ENCODE measurements at regions of chr2 and their contacts with region 1.

Region 1: DNA sequence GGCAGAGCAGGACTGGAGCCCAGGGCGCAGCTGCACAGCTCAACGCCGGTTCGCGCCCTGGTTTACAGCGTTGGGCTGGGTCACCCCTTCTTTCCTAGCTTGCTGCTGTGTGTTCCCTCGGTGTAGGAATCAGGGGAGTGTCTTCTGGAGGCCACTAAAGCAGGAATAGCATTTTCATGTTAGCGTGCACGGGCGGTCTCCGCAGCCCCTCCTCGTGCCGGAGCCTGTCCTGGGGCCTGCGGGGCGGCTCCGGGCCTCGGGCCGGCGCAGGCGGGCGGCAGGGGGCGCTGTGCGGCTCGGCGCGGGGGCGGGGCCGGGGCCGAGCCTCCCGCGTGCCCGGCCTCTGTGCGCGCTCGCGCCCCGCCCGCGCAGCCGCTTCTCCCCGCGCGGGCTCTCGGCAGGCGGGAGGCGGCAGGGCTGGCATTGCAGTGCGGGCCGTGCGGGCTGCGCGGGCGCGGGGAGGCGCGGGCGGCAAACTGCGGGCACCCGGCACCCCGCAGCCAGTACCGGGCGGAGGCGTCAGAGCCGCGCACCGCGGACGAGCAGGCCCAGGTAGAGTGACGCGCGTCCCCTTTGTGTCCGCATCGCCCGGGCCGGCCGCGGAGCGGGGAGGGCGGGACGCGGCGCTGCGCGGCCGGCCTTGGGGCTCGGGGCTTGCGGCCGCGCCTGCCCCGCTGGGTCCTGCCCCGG is at the start of gene RNF144A:
- DNase-seq: peak; percentile 72
- H3K4me3 ChIP-seq: peak within 1 kb of the TSS; percentile 49 to 93 (median 86)
- H3K27ac ChIP-seq: peak within 1 kb of the TSS; percentile 4 to 78 (median 70)
- H3K4me1 ChIP-seq: peaks cover 0 to 37% (median 7%) of the 10 kb centered on the region in 4 donors
- H3K27me3 ChIP-seq: no peaks in the 10 kb centered on the region
- CTCF ChIP-seq: peak in 3 of 4 experiments; percentile 3 to 51 (median 29)
- EP300 ChIP-seq: no peak
- POLR2A ChIP-seq: no peak
- total RNA-seq, gene RNF144A: 5.7 to 14.2 (median 12.3) TPM

Region 2: DNA sequence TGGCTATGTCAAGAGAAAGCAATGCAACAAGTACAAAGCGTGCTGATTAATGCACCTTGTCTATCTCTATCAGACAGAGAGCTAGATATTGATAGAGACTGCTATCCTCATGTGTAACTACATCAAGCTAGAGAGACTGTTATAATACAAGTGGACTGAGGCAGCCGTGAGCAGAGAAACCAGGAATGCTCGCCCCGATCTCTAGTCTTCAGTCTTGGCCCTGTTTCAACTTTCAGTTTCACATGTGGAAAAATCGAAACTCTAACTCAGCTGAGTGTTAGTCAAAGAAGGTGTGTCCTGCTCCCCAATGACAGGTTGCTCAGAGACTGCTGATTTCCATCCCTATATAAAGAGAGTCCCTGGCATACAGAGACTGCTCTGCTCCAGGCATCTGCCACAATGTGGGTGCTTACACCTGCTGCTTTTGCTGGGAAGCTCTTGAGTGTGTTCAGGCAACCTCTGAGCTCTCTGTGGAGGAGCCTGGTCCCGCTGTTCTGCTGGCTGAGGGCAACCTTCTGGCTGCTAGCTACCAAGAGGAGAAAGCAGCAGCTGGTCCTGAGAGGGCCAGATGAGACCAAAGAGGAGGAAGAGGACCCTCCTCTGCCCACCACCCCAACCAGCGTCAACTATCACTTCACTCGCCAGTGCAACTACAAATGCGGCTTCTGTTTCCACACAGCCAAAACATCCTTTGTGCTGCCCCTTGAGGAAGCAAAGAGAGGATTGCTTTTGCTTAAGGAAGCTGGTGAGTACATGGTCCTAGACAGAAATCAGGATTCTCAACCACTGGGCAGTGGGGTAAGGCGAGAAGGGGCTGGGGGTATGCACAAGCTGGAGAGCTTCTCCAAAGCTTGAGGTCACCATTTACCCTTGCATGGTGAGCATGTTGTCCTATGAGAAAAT is 39.6 kb before region 1 on chr2 and contains the start of gene RSAD2:
- intact Hi-C with region 1: loop called (anchors 5 kb)
- DNase-seq: no peak
- H3K4me3 ChIP-seq: peak within 1 kb of the TSS; percentile 28 to 53 (median 50)
- H3K27ac ChIP-seq: peak within 1 kb of the TSS; percentile 51 to 68 (median 64)
- H3K4me1 ChIP-seq: peaks cover 0 to 12% (median 8%) of the 10 kb centered on the region in 4 donors
- H3K27me3 ChIP-seq: no peaks in the 10 kb centered on the region
- CTCF ChIP-seq: no peak
- EP300 ChIP-seq: no peak
- POLR2A ChIP-seq: no peak
- total RNA-seq, gene RSAD2: 7.2 to 13.2 (median 11.3) TPM

Region 3: DNA sequence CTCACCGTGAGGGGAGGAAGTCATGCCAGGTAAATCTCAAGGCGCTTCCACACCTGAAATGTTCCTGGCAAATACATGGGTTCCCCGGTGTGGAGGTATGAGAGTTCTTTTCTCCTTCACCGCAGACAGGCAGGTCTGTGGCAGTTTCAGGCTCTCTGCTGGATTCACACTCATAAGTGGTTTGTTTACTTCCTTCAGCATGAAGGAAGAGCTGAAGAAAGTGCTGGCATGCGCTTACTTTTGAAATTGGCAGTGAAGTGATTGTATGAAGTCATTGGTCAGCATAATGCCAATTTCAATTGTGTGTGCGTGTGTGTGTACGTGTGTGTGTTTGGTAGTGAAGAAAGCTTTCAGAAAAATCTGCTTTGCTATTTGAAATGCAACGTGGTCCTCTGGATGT is 43.4 kb after region 1 on chr2:
- intact Hi-C with region 1: loop called (anchors 5 kb)
- DNase-seq: no peak
- H3K4me3 ChIP-seq: peak overlapping the region in 1 of 4 donors; percentile 1
- H3K27ac ChIP-seq: peak overlapping the region in 3 of 4 donors; percentile 4 to 54 (median 25)
- H3K4me1 ChIP-seq: peaks cover 0 to 18% (median 15%) of the 10 kb centered on the region in 4 donors
- H3K27me3 ChIP-seq: no peaks in the 10 kb centered on the region
- CTCF ChIP-seq: no peak
- EP300 ChIP-seq: no peak
- POLR2A ChIP-seq: no peak

Region 4: GRCh38 chr2:6977113-6977741 is 60.0 kb after region 1 on chr2:
- intact Hi-C with region 1: loop called (anchors 5 kb)
- DNase-seq: peak; percentile 91
- H3K4me3 ChIP-seq: peak overlapping the region in 2 of 4 donors; percentile 11 to 23
- H3K27ac ChIP-seq: peak overlapping the region in 3 of 4 donors; percentile 66 to 81 (median 73)
- H3K4me1 ChIP-seq: peaks cover 0 to 22% (median 13%) of the 10 kb centered on the region in 4 donors
- H3K27me3 ChIP-seq: no peaks in the 10 kb centered on the region
- CTCF ChIP-seq: no peak
- EP300 ChIP-seq: peak in 1 of 4 donors; percentile 10
- POLR2A ChIP-seq: no peak

Region 5: DNA sequence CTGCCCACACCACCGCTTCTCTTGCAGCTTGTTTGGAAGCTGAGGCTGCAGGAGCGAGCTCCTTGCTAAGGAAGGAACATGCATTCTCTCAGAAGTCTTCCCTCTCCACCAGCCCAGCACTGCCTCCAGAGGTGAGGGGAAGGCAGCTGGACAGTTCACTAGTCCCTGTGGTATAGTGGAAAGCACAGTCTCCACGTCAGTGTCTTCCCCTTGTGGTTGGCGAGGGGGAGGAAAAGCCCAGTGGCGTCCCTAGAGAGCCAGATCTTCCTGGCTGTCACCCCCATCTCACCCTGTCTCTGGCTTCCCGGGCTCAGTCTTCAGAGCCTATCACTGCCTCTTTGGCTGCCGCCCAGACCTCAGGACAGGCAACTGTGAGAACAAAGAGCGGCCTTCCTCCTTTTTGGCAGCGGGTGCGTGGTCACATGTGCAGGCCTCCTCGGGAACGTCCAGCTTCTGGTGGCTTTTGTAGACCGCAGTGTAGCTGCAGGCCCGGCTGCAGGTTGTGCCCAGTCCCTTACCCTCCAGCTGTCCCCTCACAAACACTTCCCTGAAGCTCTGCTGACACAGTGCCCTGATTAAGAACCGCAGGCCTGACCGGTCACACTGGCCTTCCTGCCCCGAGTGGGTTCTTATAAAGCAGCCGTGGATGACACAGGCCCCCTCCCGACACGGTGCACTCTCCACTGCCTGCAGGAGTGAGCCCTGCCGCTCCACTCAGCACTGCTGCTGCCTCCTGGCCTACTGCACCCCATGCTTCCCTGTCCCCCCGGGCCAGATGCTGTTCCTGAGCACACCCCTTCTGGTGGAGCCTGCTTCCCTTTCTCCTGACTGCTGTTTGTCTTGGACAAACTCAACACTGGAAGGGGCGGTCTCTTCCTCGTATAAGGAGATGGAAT is 90.9 kb after region 1 on chr2:
- intact Hi-C with region 1: loop called (anchors 2 kb)
- DNase-seq: peak; percentile 93
- H3K4me3 ChIP-seq: peak overlapping the region in 1 of 4 donors; percentile 16
- H3K27ac ChIP-seq: peak overlapping the region; percentile 58 to 73 (median 65)
- H3K4me1 ChIP-seq: peaks cover 0 to 74% (median 60%) of the 10 kb centered on the region in 4 donors
- H3K27me3 ChIP-seq: no peaks in the 10 kb centered on the region
- CTCF ChIP-seq: peak; percentile 22 to 42 (median 32)
- EP300 ChIP-seq: no peak
- POLR2A ChIP-seq: no peak

Region 6: DNA sequence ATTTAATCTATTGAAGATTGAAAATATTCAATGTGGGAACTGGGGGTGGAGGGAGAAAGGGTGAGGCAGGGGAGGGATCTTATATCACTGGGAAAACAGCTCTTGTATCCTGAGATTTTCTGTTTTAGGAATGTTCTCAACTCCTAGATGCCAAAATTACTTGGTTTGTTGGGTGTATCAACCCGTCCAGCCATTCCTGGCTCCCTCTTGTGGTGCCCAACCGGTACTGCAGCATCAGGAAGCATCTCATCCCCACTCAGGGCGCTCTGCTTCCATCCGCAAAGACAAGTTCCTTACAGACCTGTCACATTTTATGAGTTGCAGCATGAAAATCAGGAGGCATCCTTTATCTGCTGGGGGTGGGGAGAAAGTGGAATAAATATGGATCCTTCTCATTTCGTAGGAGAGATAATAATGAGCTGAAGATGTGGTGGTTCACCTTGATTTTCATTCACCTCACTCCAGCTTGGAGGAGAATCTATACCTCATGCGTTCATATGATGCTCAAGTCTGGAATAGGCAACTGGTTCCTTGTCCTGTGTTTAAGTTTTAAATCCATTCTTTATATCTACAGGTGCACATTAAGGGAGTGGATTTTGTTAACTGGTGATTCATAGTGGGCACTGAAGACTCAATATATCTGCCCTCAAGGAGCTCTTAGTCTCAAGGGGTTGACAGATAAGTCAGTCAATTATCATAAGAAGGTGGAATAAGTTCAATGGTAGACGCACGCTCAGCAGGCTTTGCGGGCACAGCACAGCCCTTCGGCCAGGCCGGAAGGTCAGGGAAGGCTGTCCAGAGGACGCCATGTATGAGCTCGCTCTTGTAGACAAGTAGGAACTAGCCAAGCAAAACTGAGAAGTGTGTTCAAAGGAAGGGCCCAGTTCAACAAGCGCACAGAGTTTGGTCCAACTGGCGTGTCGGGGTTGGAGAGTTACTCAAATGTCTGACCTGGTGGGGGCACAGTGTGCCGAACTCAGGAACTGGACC is 127.3 kb after region 1 on chr2:
- intact Hi-C with region 1: loop called (anchors 5 kb)
- DNase-seq: peak; percentile 85
- H3K4me3 ChIP-seq: no peak overlapping the region
- H3K27ac ChIP-seq: no peak overlapping the region
- H3K4me1 ChIP-seq: peaks cover 0 to 5% (median 2%) of the 10 kb centered on the region in 4 donors
- H3K27me3 ChIP-seq: no peaks in the 10 kb centered on the region
- CTCF ChIP-seq: peak; percentile 45 to 90 (median 86)
- EP300 ChIP-seq: no peak
- POLR2A ChIP-seq: no peak

Measured in sigmoid colon (tissue), 7 donors.